ENCODE measurements at regions of chr2 and their contacts with region 1.

Region 1: DNA sequence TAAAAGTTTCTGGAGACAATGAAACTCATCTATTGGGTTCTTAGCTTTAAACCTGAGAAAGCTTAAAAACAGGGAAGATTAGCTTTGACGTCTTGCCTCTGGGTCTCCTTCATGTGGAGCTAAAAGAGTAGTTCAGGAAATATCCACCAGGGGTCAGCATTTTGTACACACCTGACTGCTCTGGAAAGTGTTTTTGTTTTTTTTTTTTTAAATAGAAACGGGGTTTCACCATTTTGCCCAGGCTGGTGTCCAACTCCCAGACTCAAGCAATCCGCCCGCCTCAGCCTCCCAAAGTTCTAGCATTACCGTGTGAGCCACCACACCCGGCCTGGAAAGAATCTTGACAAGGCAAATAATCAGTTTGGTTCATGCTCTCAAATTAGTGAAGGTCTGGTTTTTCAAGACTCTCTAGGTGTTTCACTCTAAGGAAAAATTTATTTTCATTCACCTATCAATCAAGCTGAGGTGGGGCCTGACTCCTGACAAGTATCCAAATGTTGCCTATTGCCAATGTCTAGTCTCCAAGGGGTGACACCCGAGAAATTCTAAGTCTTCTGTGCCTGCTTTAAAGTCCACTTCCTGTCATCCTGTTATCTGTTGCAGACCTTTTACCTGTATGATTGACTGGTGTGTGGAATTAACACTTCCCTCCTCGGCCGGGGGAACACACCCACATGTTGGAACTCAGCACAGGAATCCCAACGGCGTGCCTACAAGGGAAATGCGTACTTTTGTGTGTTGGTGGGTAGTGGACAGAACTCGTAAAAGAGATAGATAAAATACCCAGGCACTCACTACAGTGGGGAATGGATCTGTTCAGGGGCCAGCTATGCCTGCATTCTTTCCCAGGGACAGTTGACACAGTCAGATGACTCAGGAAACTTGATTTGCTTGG is 11.3 kb downstream of the IL1RN start:
- DNase-seq: no peak
- ATAC-seq: peak; percentile 76

Region 2: GRCh38 chr2:113157118-113157896 is 18.6 kb after region 1 on chr2:
- intact Hi-C with region 1: no loop called
- DNase-seq: no peak
- ATAC-seq: no peak

Region 3: DNA sequence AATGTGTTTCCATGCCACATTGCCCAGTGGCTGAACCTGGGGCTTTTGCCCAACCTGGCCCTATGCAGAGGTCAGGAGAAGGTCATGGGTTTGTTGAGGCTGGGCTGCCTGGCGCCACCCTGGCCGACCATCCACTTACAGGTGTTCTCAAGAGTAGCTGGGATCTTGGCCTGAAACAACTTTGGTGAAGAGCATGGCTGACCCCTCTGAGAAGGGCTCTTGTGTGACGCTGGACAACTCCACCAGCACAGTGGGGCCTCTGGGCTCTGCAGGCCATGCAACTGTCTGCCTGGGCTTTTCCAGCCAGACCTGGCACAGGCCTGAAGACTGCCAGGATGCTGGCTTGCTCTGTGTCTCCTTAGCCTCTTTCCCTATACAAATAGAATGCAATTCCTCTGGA is 222.4 kb after region 1 on chr2:
- intact Hi-C with region 1: loop called (anchors 10 kb)
- DNase-seq: no peak
- ATAC-seq: no peak

Measured in sciatic nerve (tissue), 2 donors.